ENCODE measurements at regions of chr1 and their contacts with region 1.

Region 1: DNA sequence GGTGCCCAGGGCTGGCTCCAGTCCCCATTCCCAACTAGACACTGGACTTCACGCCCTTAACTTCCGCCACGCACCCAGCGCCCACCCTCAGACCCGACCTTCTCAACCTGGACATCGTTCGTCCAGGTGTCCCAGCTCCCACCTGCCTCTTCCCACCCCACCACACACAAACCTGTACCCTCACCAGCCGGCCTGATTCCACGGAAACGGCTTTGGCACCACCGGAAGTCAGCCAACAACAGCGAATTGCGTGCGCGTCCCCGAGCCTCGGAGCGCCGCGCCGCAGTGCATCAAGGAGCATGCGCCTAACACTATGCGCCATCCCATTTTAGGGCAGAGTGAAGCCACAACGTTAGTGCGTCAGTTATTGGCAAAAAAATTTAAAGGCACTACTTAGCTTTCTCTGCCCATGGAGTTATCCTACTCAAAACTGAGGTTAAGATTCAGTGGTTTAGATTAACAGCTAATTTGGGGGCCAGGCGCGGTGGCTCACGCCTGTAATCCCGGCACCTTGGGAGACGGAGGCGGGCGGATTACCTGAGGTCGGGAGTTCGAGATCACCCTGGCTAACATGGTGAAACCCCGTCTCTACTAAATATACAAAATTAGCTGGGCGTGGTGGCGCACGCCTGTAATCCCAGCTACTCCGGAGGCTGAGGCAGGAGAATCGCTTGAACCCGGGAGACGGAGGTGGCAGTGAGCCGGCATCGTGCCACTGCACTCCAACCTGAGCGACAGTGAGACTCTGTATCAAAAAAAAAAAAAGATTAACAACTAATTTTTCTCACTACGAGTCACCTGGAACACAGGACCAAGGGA is at the start of gene GON4L:
- DNase-seq: peak; percentile 78
- ATAC-seq: peak; percentile 68
- H3K4me3 Mint-ChIP-seq: peak within 1 kb of the TSS; percentile 99
- H3K27ac Mint-ChIP-seq: peak within 1 kb of the TSS; percentile 99
- H3K4me1 Mint-ChIP-seq: peaks cover 20% of the 10 kb centered on the region
- H3K27me3 Mint-ChIP-seq: no peaks in the 10 kb centered on the region; the same call in 1 of the 2 replicates
- CTCF ChIP-seq: no peak
- total RNA-seq, gene GON4L: 44.6 to 54.4 TPM (median 46.6 TPM) in 3 replicates

Region 2: DNA sequence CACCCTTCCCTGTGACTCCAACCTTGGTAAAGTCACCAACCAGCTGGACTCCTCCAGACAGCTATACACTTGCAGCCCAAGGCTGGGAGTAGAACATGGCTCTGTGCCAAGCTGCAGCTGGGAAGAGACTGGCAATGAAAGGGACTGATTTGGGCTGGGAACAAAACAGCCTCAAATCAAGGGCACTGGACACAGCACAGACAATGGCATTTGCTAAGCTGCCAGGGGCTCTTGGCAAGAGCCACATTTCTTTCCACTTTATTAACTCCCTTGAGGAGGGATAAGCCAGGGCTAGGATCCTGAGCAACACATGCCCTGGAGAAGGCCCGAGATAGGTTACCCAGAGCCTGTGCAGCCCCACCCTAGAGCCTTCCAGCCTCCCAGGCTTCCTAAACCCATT is 14.2 kb after region 1 on chr1:
- CTCF ChIA-PET with region 1: no interaction called
- POLR2A ChIA-PET with region 1: interaction called, 10 read pairs
- DNase-seq: no peak
- ATAC-seq: no peak
- H3K4me3 Mint-ChIP-seq: no peak overlapping the region
- H3K27ac Mint-ChIP-seq: no peak overlapping the region
- H3K4me1 Mint-ChIP-seq: no peaks in the 10 kb centered on the region
- H3K27me3 Mint-ChIP-seq: no peaks in the 10 kb centered on the region
- CTCF ChIP-seq: no peak

Region 3: GRCh38 chr1:155893389-155894142 is 36.4 kb after region 1 on chr1:
- CTCF ChIA-PET with region 1: no interaction called
- POLR2A ChIA-PET with region 1: no interaction called
- DNase-seq: no peak
- ATAC-seq: no peak
- H3K4me3 Mint-ChIP-seq: no peak overlapping the region
- H3K27ac Mint-ChIP-seq: peak overlapping the region; percentile 0
- H3K4me1 Mint-ChIP-seq: no peaks in the 10 kb centered on the region
- H3K27me3 Mint-ChIP-seq: no peaks in the 10 kb centered on the region
- CTCF ChIP-seq: no peak